GM10248 (cell line): ENCODE measurements at regions of chr3 and their contacts with region 1.

Region 1: DNA sequence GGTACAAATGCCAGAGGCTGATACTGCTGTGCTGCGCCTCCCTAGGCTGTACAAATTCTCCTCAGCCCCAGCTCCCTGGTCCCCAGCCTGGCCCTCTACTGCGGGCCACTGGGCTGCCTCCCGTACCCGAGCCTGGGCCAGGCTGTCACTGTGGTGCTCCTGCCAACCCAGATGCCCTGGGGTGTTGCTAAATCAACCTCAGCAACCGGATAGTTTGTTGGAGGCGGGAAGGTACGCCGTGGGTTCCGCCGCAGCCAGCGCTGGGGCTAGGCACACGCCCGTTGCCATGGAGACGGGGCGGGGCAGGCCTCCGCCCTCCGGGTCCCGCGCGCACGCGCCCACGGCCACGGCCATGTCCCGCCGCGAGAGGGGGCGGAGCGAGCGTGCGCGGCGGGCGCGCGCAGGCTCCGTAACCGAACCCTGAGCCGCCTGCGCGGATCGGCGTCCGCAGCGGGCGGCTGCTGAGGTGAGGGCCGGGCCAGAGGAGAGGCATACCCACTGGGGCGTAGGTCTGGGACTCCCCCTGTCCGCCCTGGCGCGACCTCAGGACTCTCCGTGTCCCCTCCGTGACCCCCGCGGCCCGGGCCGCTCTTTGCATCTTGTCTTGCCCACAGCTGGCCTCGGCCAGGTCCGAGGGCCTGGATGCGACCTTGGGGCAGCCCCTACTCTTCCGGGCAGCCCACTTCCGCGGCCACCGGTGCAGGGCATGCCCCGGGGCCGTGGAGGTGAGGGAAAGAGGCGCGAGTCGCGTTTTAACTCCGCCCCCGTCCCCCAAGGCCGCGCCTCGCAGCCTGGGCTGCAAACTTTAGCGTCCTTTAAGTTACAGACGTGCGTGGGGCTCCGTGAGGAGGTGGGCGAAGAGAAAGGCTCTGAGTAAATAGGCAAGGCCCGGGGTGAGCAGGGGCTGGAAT is at the start of gene TEX264:
- DNase-seq: peak; percentile 99
- CTCF ChIP-seq: no peak

Region 2: GRCh38 chr3:51242939-51243338 is 428.1 kb before region 1 on chr3:
- CTCF ChIA-PET with region 1: no interaction called
- POLR2A ChIA-PET with region 1: no interaction called
- DNase-seq: no peak
- CTCF ChIP-seq: no peak

Region 3: GRCh38 chr3:51391075-51391567 is 280.0 kb before region 1 on chr3 and contains the start of gene RBM15B:
- CTCF ChIA-PET with region 1: interaction called, 73 read pairs
- POLR2A ChIA-PET with region 1: no interaction called
- DNase-seq: peak; percentile 97
- CTCF ChIP-seq: peak; percentile 95

Region 4: DNA sequence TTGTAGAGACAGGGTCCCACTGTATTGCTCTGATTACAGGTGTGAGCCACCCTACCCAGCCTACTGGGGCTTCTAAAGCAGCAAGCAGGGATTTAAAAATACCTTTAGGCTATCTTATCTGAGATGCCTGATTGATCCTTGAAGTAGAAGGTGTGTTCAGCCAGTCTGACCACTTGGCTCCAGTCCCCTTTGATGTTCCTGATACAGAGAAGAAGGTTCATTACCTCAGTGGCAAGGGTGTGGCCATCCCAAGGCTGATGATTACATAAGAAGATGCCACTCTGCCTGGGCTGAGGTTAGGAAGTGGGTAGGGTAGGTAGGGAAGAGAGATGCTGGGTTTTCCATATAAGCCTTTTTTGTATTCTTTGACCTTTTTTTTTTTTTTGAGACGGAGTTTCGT is 160.1 kb before region 1 on chr3:
- CTCF ChIA-PET with region 1: interaction called, 20 read pairs
- POLR2A ChIA-PET with region 1: no interaction called
- DNase-seq: no peak
- CTCF ChIP-seq: no peak

Region 5: DNA sequence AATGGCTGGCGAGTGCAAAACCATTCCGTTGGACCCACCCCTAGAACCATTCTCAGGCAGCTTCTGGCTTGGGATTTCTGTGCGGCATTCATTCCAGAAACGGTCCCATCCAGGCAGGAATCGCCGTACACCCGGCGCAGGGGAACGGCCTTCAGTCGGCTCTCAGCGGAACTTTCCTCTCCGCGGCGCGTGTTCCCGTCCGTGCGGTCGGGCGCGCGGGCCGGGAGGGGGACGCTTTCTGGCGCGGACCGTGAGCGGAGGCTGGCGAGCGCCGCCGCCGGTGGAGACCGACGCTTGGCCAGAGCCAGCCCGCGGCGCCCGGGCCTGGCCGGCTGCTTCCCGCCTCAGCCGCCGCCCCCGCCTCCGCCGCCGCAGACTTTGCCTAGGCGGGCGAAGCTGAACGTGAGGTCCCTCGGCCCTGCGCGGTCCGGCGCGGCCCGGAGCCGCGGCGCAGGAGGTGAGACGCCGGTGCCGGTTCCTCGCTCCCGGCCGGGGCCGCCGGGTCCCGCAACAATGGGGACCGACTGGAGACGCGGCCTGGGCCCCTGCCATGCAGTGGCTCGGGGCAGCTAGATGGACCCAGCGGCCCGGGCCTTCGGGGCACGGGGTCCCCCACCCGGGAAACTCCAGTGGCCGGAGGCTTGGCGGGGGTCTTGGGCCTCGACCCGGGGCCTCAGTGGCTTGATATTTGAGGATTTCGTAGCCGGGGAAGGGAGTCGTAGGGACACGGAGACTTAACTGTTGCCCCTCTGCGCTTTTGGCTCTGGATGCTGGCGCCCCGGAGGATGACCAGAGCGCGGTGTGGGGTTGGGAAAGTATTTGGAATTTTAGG is 132.4 kb before region 1 on chr3 and contains the start of gene RAD54L2:
- CTCF ChIA-PET with region 1: interaction called, 11 read pairs
- POLR2A ChIA-PET with region 1: no interaction called
- DNase-seq: peak; percentile 91
- CTCF ChIP-seq: peak; percentile 46

Region 6: GRCh38 chr3:51637941-51638471 is 33.1 kb before region 1 on chr3:
- CTCF ChIA-PET with region 1: interaction called, 80 read pairs
- POLR2A ChIA-PET with region 1: no interaction called
- DNase-seq: peak; percentile 67
- CTCF ChIP-seq: peak; percentile 80

Region 7: DNA sequence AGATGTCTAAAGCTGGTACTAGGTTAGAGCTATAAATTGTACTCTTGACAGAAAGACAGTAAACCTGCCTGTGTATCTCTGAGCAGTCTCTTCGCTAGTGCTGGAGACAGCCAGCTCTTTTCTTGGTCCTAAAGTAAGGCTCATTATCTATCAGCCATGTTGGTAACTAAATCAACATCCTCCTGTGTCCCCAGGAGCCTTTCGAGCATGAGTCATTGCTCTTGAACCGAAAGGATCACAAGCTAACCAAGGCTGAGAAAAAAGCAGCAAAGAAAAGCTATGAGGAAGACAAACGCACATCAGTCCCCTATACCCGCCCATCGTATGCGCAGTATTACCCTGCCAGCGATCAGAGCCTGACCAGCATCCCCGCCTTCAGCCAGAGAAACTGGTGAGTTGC is 25.0 kb before region 1 on chr3:
- CTCF ChIA-PET with region 1: interaction called, 80 read pairs
- POLR2A ChIA-PET with region 1: no interaction called
- DNase-seq: no peak
- CTCF ChIP-seq: no peak

Region 8: GRCh38 chr3:51657234-51657633 is 13.8 kb before region 1 on chr3:
- CTCF ChIA-PET with region 1: interaction called, 50 read pairs
- POLR2A ChIA-PET with region 1: no interaction called
- DNase-seq: no peak
- CTCF ChIP-seq: no peak